ENCODE measurements at regions of chr2 and their contacts with region 1.

Region 1: GRCh38 chr2:137173463-137173862 is 408.1 kb downstream of the THSD7B start:
- DNase-seq: peak; percentile 58
- ATAC-seq: peak; percentile 97
- H3K4me3 ChIP-seq: no peak overlapping the region
- H3K27ac ChIP-seq: no peak overlapping the region
- H3K4me1 ChIP-seq: no peaks in the 10 kb centered on the region; the same call in 1 of the 2 replicates
- H3K27me3 ChIP-seq: 0 out of 4 replicates have a peak, but pooled peaks cover 0 to 2% of the 10 kb centered on the region in 2 experiments
- CTCF ChIP-seq: peak; percentile 41 to 59 (median 45)
- EP300 ChIP-seq: peak; percentile 43 to 69; a peak in 2 of 4 replicates
- POLR2A ChIP-seq: no peak
- RAD21 ChIP-seq: peak; percentile 39

Region 2: GRCh38 chr2:137151731-137152130 is 21.7 kb before region 1 on chr2:
- CTCF ChIA-PET with region 1: interaction called, 16 read pairs
- POLR2A ChIA-PET with region 1: interaction called, 4 read pairs
- RAD21 ChIA-PET with region 1: interaction called, 4 read pairs
- SMC1A ChIA-PET with region 1: interaction called, 7 read pairs
- in situ Hi-C with region 1: no loop called
- intact Hi-C with region 1: no loop called
- DNase-seq: no peak
- ATAC-seq: peak; percentile 61
- H3K4me3 ChIP-seq: no peak overlapping the region
- H3K27ac ChIP-seq: no peak overlapping the region
- H3K4me1 ChIP-seq: no peaks in the 10 kb centered on the region
- H3K27me3 ChIP-seq: no peaks in the 10 kb centered on the region
- CTCF ChIP-seq: no peak
- EP300 ChIP-seq: no peak
- POLR2A ChIP-seq: no peak
- RAD21 ChIP-seq: no peak

Region 3: GRCh38 chr2:137202318-137202717 is 28.9 kb after region 1 on chr2:
- CTCF ChIA-PET with region 1: interaction called, 10 read pairs
- POLR2A ChIA-PET with region 1: no interaction called
- RAD21 ChIA-PET with region 1: interaction called, 5 read pairs
- SMC1A ChIA-PET with region 1: interaction called, 6 read pairs
- in situ Hi-C with region 1: no loop called
- intact Hi-C with region 1: no loop called
- DNase-seq: no peak
- ATAC-seq: peak; percentile 63
- H3K4me3 ChIP-seq: no peak overlapping the region
- H3K27ac ChIP-seq: no peak overlapping the region
- H3K4me1 ChIP-seq: no peaks in the 10 kb centered on the region
- H3K27me3 ChIP-seq: no peaks in the 10 kb centered on the region
- CTCF ChIP-seq: no peak
- EP300 ChIP-seq: no peak
- POLR2A ChIP-seq: no peak
- RAD21 ChIP-seq: no peak

Region 4: DNA sequence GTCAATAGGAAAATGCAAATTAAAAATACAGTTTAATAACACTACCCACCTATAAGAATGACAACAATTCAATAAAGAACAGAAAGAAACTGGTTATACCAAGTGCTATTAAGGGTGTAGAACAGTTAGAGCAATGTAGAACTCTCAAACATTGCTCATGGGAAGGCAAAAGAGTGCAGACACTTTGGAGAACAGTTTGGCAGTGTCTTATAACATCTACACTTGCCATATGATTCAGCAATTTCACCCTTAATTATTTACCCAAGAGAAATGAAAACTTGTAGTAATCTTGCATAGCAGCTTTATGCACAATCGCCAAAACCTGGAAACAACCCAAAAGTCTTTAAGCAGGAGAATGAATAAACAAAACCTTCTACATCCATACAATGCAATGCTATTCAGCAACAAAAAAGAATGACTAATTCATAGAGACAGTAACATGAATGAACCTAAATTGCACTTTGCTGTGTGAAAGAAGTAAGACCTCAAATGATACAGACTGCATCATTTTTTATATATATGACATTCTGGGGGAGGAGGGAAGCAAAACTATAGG is 47.1 kb after region 1 on chr2:
- CTCF ChIA-PET with region 1: interaction called, 6 read pairs
- POLR2A ChIA-PET with region 1: no interaction called
- RAD21 ChIA-PET with region 1: interaction called, 32 read pairs
- SMC1A ChIA-PET with region 1: interaction called, 23 read pairs
- in situ Hi-C with region 1: no loop called
- intact Hi-C with region 1: loop called (anchors 1 kb)
- DNase-seq: no peak
- ATAC-seq: peak; percentile 50
- H3K4me3 ChIP-seq: no peak overlapping the region
- H3K27ac ChIP-seq: no peak overlapping the region
- H3K4me1 ChIP-seq: no peaks in the 10 kb centered on the region
- H3K27me3 ChIP-seq: no peaks in the 10 kb centered on the region
- CTCF ChIP-seq: no peak
- EP300 ChIP-seq: no peak
- POLR2A ChIP-seq: no peak
- RAD21 ChIP-seq: no peak

Region 5: GRCh38 chr2:137302957-137303356 is 129.5 kb after region 1 on chr2:
- CTCF ChIA-PET with region 1: no interaction called
- POLR2A ChIA-PET with region 1: no interaction called
- RAD21 ChIA-PET with region 1: no interaction called
- SMC1A ChIA-PET with region 1: no interaction called
- in situ Hi-C with region 1: no loop called
- intact Hi-C with region 1: no loop called
- DNase-seq: no peak
- ATAC-seq: no peak
- H3K4me3 ChIP-seq: no peak overlapping the region
- H3K27ac ChIP-seq: no peak overlapping the region
- H3K4me1 ChIP-seq: no peaks in the 10 kb centered on the region
- H3K27me3 ChIP-seq: no peaks in the 10 kb centered on the region
- CTCF ChIP-seq: no peak
- EP300 ChIP-seq: no peak
- POLR2A ChIP-seq: no peak
- RAD21 ChIP-seq: no peak